MCF 10A (cell line): ENCODE measurements at regions of chr16 and their contacts with region 1.

Region 1: DNA sequence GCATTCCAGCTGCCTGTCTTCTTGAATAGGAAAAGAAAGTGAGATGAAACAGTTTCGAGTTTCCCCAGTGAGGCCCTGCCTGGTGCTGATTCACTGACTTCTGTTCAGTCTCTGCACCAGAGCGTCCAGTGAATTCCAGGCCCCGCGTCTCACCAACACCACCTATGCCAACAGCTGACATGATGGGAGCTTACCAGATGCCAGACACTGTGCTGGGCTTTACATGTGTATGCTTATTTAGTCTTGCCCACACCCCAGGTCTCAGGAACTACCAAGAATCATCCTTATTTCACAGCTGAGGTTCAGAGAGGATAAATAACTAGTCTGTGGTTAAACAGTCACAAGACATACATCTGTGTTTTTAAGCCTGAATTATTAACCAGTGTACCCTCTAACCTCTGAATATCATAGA is 29.1 kb upstream of the IRX6 start:
- DNase-seq: no peak
- H3K4me3 Mint-ChIP-seq: no peak overlapping the region
- H3K27ac Mint-ChIP-seq: no peak overlapping the region
- H3K4me1 Mint-ChIP-seq: peaks cover 11% of the 10 kb centered on the region
- H3K27me3 Mint-ChIP-seq: no peaks in the 10 kb centered on the region
- CTCF ChIP-seq: no peak

Region 2: GRCh38 chr16:53404959-53405358 is 1890.0 kb before region 1 on chr16:
- CTCF ChIA-PET with region 1: no interaction called
- POLR2A ChIA-PET with region 1: no interaction called
- intact Hi-C with region 1: no loop called
- DNase-seq: peak; percentile 8
- H3K4me3 Mint-ChIP-seq: no peak overlapping the region
- H3K27ac Mint-ChIP-seq: no peak overlapping the region
- H3K4me1 Mint-ChIP-seq: no peaks in the 10 kb centered on the region
- H3K27me3 Mint-ChIP-seq: no peaks in the 10 kb centered on the region
- CTCF ChIP-seq: peak; percentile 24

Region 3: GRCh38 chr16:55437625-55438024 is 142.7 kb after region 1 on chr16:
- CTCF ChIA-PET with region 1: no interaction called
- POLR2A ChIA-PET with region 1: interaction called, 3 read pairs
- intact Hi-C with region 1: loop called (anchors 10 kb)
- DNase-seq: peak; percentile 95
- H3K4me3 Mint-ChIP-seq: no peak overlapping the region
- H3K27ac Mint-ChIP-seq: no peak overlapping the region
- H3K4me1 Mint-ChIP-seq: peaks cover 29% of the 10 kb centered on the region
- H3K27me3 Mint-ChIP-seq: peaks cover 30% of the 10 kb centered on the region
- CTCF ChIP-seq: no peak